AG04450 (cell line): ENCODE measurements at regions of chr14 and their contacts with region 1.

Region 1: GRCh38 chr14:61837336-61838229 is 75.4 kb downstream of the SNAPC1 start:
- DNase-seq: peak; percentile 55
- H3K4me3 ChIP-seq: no peak overlapping the region
- H3K27ac ChIP-seq: no peak overlapping the region
- H3K27me3 ChIP-seq: peaks cover 2% of the 10 kb centered on the region
- CTCF ChIP-seq: peak; percentile 94

Region 2: GRCh38 chr14:61456720-61457119 is 380.9 kb before region 1 on chr14:
- CTCF ChIA-PET with region 1: interaction called, 79 read pairs
- POLR2A ChIA-PET with region 1: no interaction called
- DNase-seq: no peak
- H3K4me3 ChIP-seq: no peak overlapping the region
- H3K27ac ChIP-seq: no peak overlapping the region
- H3K27me3 ChIP-seq: peaks cover 10% of the 10 kb centered on the region
- CTCF ChIP-seq: peak; percentile 88

Region 3: GRCh38 chr14:61749867-61750266 is 87.7 kb before region 1 on chr14:
- CTCF ChIA-PET with region 1: interaction called, 10 read pairs
- POLR2A ChIA-PET with region 1: no interaction called
- DNase-seq: no peak
- H3K4me3 ChIP-seq: peak overlapping the region; percentile 33
- H3K27ac ChIP-seq: no peak overlapping the region
- H3K27me3 ChIP-seq: no peaks in the 10 kb centered on the region
- CTCF ChIP-seq: no peak

Region 4: GRCh38 chr14:61768240-61768639 is 69.3 kb before region 1 on chr14:
- CTCF ChIA-PET with region 1: interaction called, 10 read pairs
- POLR2A ChIA-PET with region 1: no interaction called
- DNase-seq: no peak
- H3K4me3 ChIP-seq: no peak overlapping the region
- H3K27ac ChIP-seq: no peak overlapping the region
- H3K27me3 ChIP-seq: no peaks in the 10 kb centered on the region
- CTCF ChIP-seq: no peak

Region 5: GRCh38 chr14:61968207-61968606 is 130.6 kb after region 1 on chr14:
- CTCF ChIA-PET with region 1: no interaction called
- POLR2A ChIA-PET with region 1: no interaction called
- DNase-seq: no peak
- H3K4me3 ChIP-seq: no peak overlapping the region
- H3K27ac ChIP-seq: no peak overlapping the region
- H3K27me3 ChIP-seq: no peaks in the 10 kb centered on the region
- CTCF ChIP-seq: no peak

Region 6: DNA sequence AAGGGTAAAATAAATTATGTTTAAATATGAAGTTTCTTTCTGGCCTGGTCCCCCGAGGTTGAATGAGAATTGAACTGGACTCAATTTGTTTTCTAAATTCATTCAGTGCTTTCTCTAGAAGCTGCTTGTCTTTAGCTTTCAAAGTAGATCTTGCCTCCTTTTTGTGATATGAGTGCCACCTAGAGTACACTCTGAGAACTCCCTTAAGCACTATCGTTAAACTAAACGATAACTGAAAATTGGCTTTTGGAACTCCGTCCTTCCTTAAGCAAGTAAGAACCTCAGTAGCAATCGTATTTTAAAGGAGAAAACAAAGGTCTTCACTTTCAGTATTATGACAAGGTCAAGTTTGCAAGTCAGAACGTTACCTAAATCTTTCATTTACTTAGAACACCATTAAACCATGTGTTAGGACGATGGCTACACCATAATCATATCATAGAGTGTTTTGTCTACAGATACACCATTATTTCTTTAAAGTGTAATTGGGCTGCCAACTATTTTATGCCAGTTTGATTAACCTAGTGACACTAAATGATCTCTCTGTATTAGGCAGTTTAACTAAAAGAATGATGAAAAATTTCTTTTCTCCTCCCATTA is 289.4 kb after region 1 on chr14:
- CTCF ChIA-PET with region 1: interaction called, 30 read pairs
- POLR2A ChIA-PET with region 1: no interaction called
- DNase-seq: peak; percentile 32
- H3K4me3 ChIP-seq: no peak overlapping the region
- H3K27ac ChIP-seq: no peak overlapping the region
- H3K27me3 ChIP-seq: no peaks in the 10 kb centered on the region
- CTCF ChIP-seq: peak; percentile 90